K562 (cell line): ENCODE measurements at regions of chr5 and their contacts with region 1.

Region 1: GRCh38 chr5:43484106-43484849 is 613 bp upstream of the TMEM267 start:
- DNase-seq: peak; percentile 73 to 95 (median 82)
- ATAC-seq: peak; percentile 83
- H3K4me3 ChIP-seq: peak overlapping the region; percentile 73
- H3K27ac ChIP-seq: peak overlapping the region; percentile 92
- H3K4me1 ChIP-seq: peaks cover 6 to 8% of the 10 kb centered on the region in 2 experiments; a peak in 3 of 5 replicates
- H3K27me3 ChIP-seq: no peaks in the 10 kb centered on the region
- CTCF ChIP-seq: peak; percentile 90 to 91 (median 90)
- EP300 ChIP-seq: peak; percentile 31; the same call in 1 of the 2 replicates
- POLR2A ChIP-seq: peak; percentile 81
- RAD21 ChIP-seq: peak; percentile 58 to 75

Region 2: GRCh38 chr5:43066799-43067741 is 417.2 kb before region 1 on chr5:
- CTCF ChIA-PET with region 1: no interaction called
- POLR2A ChIA-PET with region 1: interaction called, 6 read pairs
- in situ Hi-C with region 1: no loop called
- intact Hi-C with region 1: loop called (anchors 5 kb)
- DNase-seq: peak; percentile 45 to 95 (median 58)
- ATAC-seq: peak; percentile 60
- H3K4me3 ChIP-seq: peak overlapping the region; percentile 80
- H3K27ac ChIP-seq: peak overlapping the region; percentile 97
- H3K4me1 ChIP-seq: peaks cover 14 to 25% of the 10 kb centered on the region in 2 experiments
- H3K27me3 ChIP-seq: no peaks in the 10 kb centered on the region; a peak in 1 of 5 replicates
- CTCF ChIP-seq: 0 out of 6 replicates have a peak, but pooled peaks of 1 of the 3 experiments have one; percentile 2
- EP300 ChIP-seq: peak; percentile 100
- POLR2A ChIP-seq: peak; percentile 78
- RAD21 ChIP-seq: no peak

Region 3: DNA sequence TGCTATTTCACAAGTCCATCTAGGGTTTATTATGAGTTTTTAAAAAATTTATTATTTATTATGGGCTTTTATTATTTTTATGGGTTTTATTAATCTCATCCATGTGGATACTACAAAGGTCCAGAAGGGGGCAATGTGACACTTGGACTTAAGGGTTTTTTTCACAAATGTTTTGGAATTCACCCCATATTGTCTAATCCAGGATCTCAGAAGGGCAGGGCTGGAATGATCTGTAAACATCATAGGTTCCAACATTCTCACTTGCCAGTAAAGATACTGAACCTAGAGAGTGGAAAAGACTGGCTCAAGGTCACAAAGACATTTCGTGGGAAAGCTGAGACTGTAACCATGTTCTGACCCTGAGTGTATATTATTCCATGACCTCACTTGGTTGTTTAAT is 256.6 kb before region 1 on chr5:
- CTCF ChIA-PET with region 1: no interaction called
- POLR2A ChIA-PET with region 1: interaction called, 5 read pairs
- in situ Hi-C with region 1: no loop called
- intact Hi-C with region 1: loop called (anchors 2 kb)
- DNase-seq: peak; percentile 41 to 72 (median 49)
- ATAC-seq: peak; percentile 53; the same call in 2 of the 3 replicates
- H3K4me3 ChIP-seq: no peak overlapping the region
- H3K27ac ChIP-seq: no peak overlapping the region
- H3K4me1 ChIP-seq: peaks cover 0 to 16% of the 10 kb centered on the region in 2 experiments; a peak in 3 of 5 replicates
- H3K27me3 ChIP-seq: no peaks in the 10 kb centered on the region
- CTCF ChIP-seq: peak; percentile 54 to 86 (median 57); a peak in 4 of 6 replicates
- EP300 ChIP-seq: no peak
- POLR2A ChIP-seq: no peak
- RAD21 ChIP-seq: peak; percentile 82 to 87

Region 4: DNA sequence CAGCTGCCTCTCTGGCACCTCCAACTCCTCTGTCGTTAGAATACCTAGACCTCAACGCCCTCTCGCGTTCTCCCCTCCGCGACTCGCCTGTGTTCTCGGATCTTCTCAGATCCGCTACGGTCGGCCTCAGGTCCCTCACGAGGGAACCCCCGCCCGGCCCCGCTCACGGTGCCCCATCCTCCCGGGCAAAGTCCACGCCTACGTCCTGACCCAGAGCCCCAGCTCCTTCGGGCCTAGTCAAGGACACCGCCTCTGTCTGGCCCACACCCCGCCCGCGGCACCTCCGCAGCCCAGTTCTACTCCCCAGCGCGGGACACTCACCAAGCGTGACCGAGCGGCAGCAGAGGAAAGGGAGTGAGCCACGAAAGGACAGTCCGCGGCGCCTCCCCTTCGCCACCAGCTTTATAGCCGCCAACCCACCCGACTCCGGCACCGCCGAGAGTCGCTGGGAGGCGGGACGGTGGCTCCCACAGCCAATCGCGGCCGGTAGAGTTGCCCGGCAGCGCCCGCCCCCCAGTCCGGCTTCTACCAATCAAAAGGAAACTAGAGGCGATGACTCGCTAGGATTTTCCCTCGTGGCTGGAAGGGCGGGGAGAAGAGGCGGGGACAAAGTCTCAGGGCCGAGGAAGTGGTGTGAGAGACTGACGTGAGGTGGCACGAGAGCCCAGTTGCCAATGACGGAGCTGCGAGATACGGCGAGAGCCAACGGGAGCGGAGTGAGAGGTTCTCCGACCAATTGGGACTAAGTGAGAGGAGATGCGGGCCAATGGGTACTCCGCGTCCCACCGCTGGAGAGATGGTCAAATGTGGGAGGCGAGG is 171.0 kb before region 1 on chr5 and contains the start of gene HMGCS1:
- CTCF ChIA-PET with region 1: no interaction called
- POLR2A ChIA-PET with region 1: interaction called, 17 read pairs
- in situ Hi-C with region 1: no loop called
- intact Hi-C with region 1: loop called (anchors 5 kb)
- DNase-seq: peak; percentile 98 to 99 (median 98)
- ATAC-seq: peak; percentile 98
- H3K4me3 ChIP-seq: peak within 1 kb of the TSS; percentile 90
- H3K27ac ChIP-seq: peak within 1 kb of the TSS; percentile 83
- H3K4me1 ChIP-seq: peaks cover 13 to 29% of the 10 kb centered on the region in 2 experiments; a peak in 4 of 5 replicates
- H3K27me3 ChIP-seq: no peaks in the 10 kb centered on the region
- CTCF ChIP-seq: peak in 1 of 3 experiments; percentile 29; a peak in 1 of 6 replicates
- EP300 ChIP-seq: peak; percentile 69; the same call in 1 of the 2 replicates
- POLR2A ChIP-seq: peak; percentile 98
- RAD21 ChIP-seq: peak in 1 of 2 experiments; percentile 18; a peak in 2 of 4 replicates
- polyA plus RNA-seq, gene HMGCS1: 84.6 to 93.1 TPM

Region 5: GRCh38 chr5:43415946-43416802 is 68.1 kb before region 1 on chr5:
- CTCF ChIA-PET with region 1: no interaction called
- POLR2A ChIA-PET with region 1: interaction called, 13 read pairs
- in situ Hi-C with region 1: no loop called
- intact Hi-C with region 1: loop called (anchors 5 kb)
- DNase-seq: peak; percentile 63 to 92 (median 78)
- ATAC-seq: peak; percentile 95
- H3K4me3 ChIP-seq: no peak overlapping the region
- H3K27ac ChIP-seq: peak overlapping the region; percentile 9; the same call in 1 of the 3 replicates
- H3K4me1 ChIP-seq: peaks cover 14 to 20% of the 10 kb centered on the region in 2 experiments
- H3K27me3 ChIP-seq: no peaks in the 10 kb centered on the region
- CTCF ChIP-seq: no peak
- EP300 ChIP-seq: peak; percentile 88
- POLR2A ChIP-seq: no peak
- RAD21 ChIP-seq: peak in 1 of 2 experiments; percentile 15; a peak in 1 of 4 replicates

Region 6: GRCh38 chr5:43514816-43515677 is 30.8 kb after region 1 on chr5 and contains the start of gene C5orf34:
- CTCF ChIA-PET with region 1: interaction called, 6 read pairs
- POLR2A ChIA-PET with region 1: interaction called, 11 read pairs
- in situ Hi-C with region 1: no loop called
- intact Hi-C with region 1: loop called (anchors 1 kb)
- DNase-seq: peak; percentile 98 to 99 (median 99)
- ATAC-seq: peak; percentile 96
- H3K4me3 ChIP-seq: peak within 1 kb of the TSS; percentile 64
- H3K27ac ChIP-seq: peak within 1 kb of the TSS; percentile 85
- H3K4me1 ChIP-seq: peaks cover 0 to 16% of the 10 kb centered on the region in 2 experiments; a peak in 4 of 5 replicates
- H3K27me3 ChIP-seq: no peaks in the 10 kb centered on the region
- CTCF ChIP-seq: peak in 1 of 3 experiments; percentile 21; a peak in 1 of 6 replicates
- EP300 ChIP-seq: peak; percentile 6; the same call in 1 of the 2 replicates
- POLR2A ChIP-seq: peak; percentile 97
- RAD21 ChIP-seq: 0 out of 4 replicates have a peak, but pooled peaks of 1 of the 2 experiments have one; percentile 9
- polyA plus RNA-seq, gene C5orf34: 21.4 to 27.8 TPM

Region 7: GRCh38 chr5:43602461-43603343 is 118.4 kb after region 1 on chr5 and contains the start of gene NNT:
- CTCF ChIA-PET with region 1: no interaction called
- POLR2A ChIA-PET with region 1: interaction called, 6 read pairs
- in situ Hi-C with region 1: no loop called
- intact Hi-C with region 1: loop called (anchors 10 kb)
- DNase-seq: peak; percentile 83 to 89 (median 86)
- ATAC-seq: peak; percentile 84
- H3K4me3 ChIP-seq: peak within 1 kb of the TSS; percentile 60
- H3K27ac ChIP-seq: peak within 1 kb of the TSS; percentile 91
- H3K4me1 ChIP-seq: peaks cover 18% of the 10 kb centered on the region in 2 experiments
- H3K27me3 ChIP-seq: no peaks in the 10 kb centered on the region
- CTCF ChIP-seq: no peak
- EP300 ChIP-seq: no peak; the same call in 1 of the 2 replicates
- POLR2A ChIP-seq: peak; percentile 68
- RAD21 ChIP-seq: no peak
- polyA plus RNA-seq, gene NNT: 21.9 to 30.5 TPM